Naive thymus-derived CD8-positive, alpha-beta T cell (primary cell): ENCODE measurements at regions of chr1 and their contacts with region 1.

Region 1: DNA sequence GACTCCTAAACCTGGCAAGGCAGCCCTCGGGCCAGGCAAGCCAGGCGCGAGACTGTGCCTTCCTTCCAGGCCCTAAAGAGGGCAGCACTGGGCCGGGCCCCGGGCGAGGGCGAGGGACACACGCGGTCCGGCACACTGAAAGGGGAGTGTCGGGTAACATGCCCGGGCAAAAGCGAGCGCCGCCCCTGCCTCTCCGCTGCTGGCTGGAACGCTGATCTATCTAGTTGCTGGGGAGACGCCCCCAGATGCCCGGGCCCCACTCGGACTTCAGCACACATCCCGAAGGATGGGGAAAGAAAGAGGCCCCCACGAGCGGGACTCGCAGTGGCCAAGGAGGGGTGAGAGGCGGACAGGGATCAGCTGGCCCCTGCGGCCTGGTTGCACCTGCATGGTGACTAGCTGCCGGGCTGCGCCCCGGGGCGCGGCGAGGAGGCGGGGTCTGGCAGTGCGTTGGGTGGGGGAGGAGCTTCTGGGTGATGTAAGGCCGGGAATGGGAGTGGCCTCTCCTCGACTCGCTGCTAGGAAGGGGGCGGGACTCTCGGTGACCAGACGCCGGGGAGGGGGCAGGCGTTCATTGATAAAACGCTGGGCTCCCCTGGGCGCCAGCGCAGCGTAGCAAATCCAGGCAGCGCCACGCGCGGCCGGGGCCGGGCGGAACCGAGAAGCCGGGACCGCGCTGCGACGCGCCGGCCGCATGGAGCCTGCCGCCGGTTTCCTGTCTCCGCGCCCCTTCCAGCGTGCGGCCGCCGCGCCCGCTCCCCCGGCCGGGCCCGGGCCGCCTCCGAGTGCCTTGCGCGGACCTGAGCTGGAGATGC is at the start of gene PLK3:
- DNase-seq: peak; percentile 97 to 99 (median 98)
- ATAC-seq: peak; percentile 78 to 81
- H3K4me3 Mint-ChIP-seq: peak within 1 kb of the TSS; percentile 72 to 99 (median 97)
- H3K27ac Mint-ChIP-seq: peak within 1 kb of the TSS; percentile 89 to 99 (median 99)
- H3K4me1 Mint-ChIP-seq: peaks cover 17 to 48% (median 45%) of the 10 kb centered on the region in 4 donors
- H3K27me3 Mint-ChIP-seq: no peaks in the 10 kb centered on the region
- polyA plus RNA-seq, gene PLK3: 14.3 to 36.0 (median 25.5) TPM

Region 2: DNA sequence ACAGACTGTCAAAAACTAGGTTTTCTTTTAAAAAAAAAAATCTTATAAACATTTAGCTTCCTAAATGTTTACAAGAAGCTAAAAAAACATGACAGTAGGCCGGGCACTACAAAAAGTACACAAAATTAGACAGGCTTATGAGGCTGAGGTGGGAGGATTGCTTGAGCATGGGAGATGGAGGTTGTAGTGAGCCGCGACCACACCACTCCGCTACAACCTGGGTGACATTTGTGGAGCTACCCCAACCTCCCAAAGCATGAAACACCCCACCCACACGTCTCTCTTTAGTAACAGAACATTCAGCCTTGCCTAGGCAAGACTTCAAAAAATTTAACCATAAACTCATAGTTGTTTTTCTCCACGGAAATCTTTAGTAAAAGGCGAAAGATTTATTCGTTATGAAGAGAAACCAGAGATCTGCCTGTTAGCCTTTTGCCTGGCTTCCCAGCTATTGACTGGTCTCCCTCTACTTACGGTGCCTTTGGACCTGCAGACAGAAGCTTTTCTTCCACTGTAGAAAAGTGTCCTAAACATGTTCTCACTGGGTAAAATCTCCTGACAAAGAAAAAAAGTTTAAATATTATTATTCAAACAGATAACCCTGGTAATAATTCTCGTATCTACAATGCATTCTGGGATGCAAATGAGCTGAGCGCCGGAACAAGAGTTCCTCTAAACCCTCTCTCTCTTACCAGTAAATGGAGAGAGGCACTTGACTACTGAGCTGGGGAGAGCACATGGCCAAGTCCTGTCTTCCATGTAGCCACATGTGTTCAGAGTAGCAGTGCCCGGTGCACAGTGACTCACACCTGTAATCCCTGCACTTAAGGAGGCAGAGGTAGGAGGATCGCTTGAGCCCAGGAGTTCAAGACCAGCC is 78.3 kb before region 1 on chr1:
- POLR2A ChIA-PET with region 1: interaction called, 32 read pairs
- DNase-seq: peak; percentile 17 to 85 (median 74)
- ATAC-seq: peak; percentile 84 to 90
- H3K4me3 Mint-ChIP-seq: peak overlapping the region; percentile 42 to 85 (median 79)
- H3K27ac Mint-ChIP-seq: peak overlapping the region; percentile 93 to 99 (median 96)
- H3K4me1 Mint-ChIP-seq: peaks cover 50 to 80% (median 78%) of the 10 kb centered on the region in 4 donors
- H3K27me3 Mint-ChIP-seq: no peaks in the 10 kb centered on the region

Region 3: DNA sequence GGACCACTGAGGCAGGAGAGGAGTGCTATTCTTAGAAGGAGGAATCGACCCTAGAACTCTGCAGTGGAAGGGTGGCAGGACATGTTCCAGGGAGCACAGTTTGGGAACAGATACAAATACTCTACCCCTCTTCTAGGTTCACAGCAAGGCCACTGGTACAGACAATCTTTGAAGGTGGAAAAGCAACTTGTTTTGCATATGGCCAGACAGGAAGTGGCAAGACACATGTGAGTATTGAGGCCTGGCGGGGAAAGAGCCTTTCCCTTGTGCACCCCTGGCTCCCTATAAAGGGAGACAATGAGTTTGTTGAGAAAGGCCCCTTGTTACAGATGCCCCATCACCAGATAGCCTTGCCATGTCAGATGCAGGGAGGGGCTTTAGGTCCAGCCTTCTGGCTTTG is 42.6 kb before region 1 on chr1:
- POLR2A ChIA-PET with region 1: no interaction called
- DNase-seq: no peak
- ATAC-seq: no peak
- H3K4me3 Mint-ChIP-seq: no peak overlapping the region
- H3K27ac Mint-ChIP-seq: peak overlapping the region in 2 of 10 donors; percentile 53 to 79
- H3K4me1 Mint-ChIP-seq: peaks cover 5 to 20% (median 14%) of the 10 kb centered on the region in 4 donors
- H3K27me3 Mint-ChIP-seq: no peaks in the 10 kb centered on the region

Region 4: DNA sequence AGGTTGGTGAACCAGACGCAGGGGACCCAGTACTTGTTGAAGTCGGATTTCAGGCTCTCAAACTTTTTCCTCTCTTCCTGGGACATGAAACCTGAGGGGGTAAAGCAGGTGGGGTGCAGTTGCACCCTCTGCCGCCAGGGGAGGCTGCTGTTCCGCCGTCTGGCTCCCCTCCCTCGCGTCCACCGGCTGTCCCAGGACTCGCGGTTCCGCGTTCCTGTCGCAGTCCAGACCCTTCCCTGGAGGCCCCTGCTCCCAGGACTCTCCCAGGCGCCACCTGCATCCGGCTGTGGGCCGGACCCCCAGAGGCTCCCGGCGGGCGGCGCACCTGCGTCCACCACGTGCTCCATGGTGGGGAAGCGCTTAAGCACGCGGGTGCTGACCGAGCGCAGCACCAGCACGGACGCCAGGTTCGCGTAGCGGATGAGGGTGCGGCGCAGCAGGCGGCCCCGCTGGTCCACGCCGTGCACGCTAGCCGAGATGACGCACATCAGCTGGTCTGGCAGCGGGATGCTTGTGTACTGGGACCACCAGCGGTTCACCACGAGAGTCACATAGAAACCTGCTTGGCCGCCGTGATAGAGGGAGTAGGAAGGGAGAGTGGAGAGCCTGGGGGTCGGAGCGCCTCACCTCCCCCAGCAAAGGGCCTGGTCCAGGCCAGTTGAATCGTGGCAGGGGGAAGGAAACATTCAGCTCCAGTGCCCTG is 13.7 kb before region 1 on chr1:
- POLR2A ChIA-PET with region 1: interaction called, 52 read pairs
- DNase-seq: peak; percentile 64 to 91 (median 79)
- ATAC-seq: peak; percentile 75 to 77
- H3K4me3 Mint-ChIP-seq: peak overlapping the region; percentile 69 to 84 (median 80)
- H3K27ac Mint-ChIP-seq: peak overlapping the region; percentile 35 to 95 (median 88)
- H3K4me1 Mint-ChIP-seq: peaks cover 16 to 34% (median 30%) of the 10 kb centered on the region in 4 donors
- H3K27me3 Mint-ChIP-seq: no peaks in the 10 kb centered on the region

Region 5: GRCh38 chr1:44826375-44827196 is 26.6 kb after region 1 on chr1:
- POLR2A ChIA-PET with region 1: interaction called, 590 read pairs
- DNase-seq: peak in 1 of 10 donors; percentile 50
- ATAC-seq: no peak
- H3K4me3 Mint-ChIP-seq: no peak overlapping the region
- H3K27ac Mint-ChIP-seq: no peak overlapping the region
- H3K4me1 Mint-ChIP-seq: peaks cover 0 to 2% (median 1%) of the 10 kb centered on the region in 4 donors
- H3K27me3 Mint-ChIP-seq: no peaks in the 10 kb centered on the region

Region 6: DNA sequence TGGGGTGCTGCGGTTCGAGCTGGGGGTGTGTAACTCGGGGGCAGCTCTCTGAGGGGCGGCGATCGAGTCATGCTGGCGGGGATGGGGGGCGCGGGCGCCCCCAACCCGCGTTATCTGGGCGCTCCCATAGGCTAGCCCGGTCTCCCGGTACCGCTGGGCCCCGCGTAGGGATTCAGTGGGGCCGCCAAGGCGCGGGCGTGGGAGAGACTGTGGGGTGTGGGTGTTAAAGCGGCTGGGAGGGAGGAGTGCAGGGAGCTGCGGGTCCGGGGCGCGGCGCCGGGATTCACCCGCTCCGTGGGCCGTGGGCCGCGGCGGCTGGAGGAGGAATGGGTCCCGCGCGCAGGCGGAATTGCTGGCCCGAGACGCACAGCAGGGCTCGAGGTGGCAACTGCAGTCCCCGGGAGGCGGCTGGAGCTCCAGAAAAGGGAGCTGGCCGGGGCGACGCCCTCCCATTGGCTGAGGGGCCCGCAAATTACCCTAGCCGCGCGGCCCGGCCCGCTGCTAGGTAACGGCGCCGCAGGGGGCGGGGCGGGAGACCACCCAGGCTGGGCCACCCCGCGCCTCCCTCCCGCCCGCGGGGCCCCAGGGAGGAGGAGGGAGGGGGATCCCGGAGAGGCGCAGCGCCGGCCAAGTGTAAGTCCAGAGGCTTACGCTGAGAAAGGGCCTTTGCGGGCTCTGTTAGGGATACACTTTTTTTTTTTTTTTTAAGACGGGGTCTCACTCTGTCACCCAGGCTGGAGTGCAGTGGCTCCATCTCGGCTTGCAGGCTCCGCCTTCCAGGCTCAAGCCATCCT is 43.1 kb after region 1 on chr1 and contains the start of gene PTCH2:
- POLR2A ChIA-PET with region 1: interaction called, 12 read pairs
- DNase-seq: peak; percentile 20 to 67 (median 36)
- ATAC-seq: peak; percentile 83 to 91
- H3K4me3 Mint-ChIP-seq: peak within 1 kb of the TSS; percentile 68 to 81 (median 76)
- H3K27ac Mint-ChIP-seq: peak within 1 kb of the TSS in 5 of 10 donors; percentile 57 to 76 (median 70)
- H3K4me1 Mint-ChIP-seq: peaks cover 3 to 8% (median 7%) of the 10 kb centered on the region in 4 donors
- H3K27me3 Mint-ChIP-seq: peaks cover 0 to 7% (median 3%) of the 10 kb centered on the region in 5 donors
- polyA plus RNA-seq, gene PTCH2: not detected

Region 7: DNA sequence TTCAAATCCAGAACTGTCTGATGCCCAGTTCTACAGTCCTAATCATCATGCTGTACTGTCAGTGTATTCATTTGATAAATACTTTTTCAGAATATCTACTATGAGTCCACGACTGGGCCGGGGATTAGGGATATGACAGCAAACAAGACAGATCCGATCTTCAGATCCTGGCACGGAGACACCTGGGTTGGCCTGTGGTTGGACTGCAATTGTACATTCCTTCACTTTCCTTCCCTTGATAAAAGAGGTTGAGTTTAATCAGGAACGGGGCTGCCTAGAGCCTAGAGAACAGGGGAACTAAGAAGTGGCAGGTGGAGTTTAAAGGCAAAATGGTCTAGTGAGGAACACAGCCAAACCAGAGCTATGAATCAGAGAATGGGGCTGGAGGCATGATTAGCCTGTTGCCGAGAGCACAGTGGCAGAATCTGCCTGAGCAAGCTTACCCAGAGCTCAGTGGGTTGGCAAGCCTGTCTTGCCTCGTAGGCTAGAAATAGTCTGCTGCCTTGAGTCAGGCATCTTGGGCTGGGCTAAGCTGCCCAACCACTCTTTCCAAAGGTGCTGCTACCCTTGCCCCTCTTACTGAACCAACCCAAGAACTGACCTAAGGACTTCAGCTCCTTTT is 81.1 kb after region 1 on chr1:
- POLR2A ChIA-PET with region 1: no interaction called
- DNase-seq: no peak
- ATAC-seq: no peak
- H3K4me3 Mint-ChIP-seq: no peak overlapping the region
- H3K27ac Mint-ChIP-seq: no peak overlapping the region
- H3K4me1 Mint-ChIP-seq: peaks cover 0 to 1% (median 0%) of the 10 kb centered on the region in 4 donors
- H3K27me3 Mint-ChIP-seq: no peaks in the 10 kb centered on the region

Region 8: DNA sequence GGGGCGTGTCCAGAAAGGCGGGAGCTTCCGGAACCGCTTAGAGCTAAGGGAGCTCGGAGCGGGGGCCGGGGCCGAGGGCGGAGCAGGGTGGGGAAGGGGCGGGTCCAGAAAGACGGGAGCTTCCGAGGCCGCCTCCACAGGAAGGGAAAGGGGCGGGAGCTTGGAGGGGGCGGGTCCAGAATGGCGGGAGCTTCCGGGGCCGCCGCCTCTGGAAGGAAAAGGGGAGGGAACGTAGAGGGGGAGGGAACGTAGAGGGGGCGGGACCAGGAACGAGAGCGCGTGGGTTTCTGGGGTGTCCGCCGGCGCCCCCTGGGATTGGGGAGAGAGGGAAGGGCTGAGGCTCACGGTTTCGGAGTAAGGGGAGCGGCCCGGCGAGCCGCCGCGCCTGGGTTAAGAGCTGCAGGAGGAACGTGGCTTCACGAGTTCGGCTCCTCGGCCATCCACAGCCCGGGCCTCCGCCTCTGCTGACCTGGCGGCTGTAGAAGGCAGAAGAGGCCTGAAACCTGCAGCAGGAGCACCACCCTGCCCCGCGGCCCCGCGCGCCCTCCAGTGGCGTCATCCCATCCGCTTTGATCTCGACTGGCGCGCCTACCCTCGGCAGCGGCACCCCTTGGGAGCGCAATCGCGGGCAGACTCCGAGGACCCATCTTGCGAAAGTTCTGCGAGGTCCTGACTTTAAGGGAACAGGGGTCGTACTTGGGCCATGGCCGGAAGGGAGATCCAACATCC is 503.8 kb after region 1 on chr1:
- POLR2A ChIA-PET with region 1: interaction called, 19 read pairs
- DNase-seq: peak; percentile 86 to 98 (median 96)
- ATAC-seq: peak; percentile 83 to 86
- H3K4me3 Mint-ChIP-seq: peak overlapping the region; percentile 88 to 96 (median 92)
- H3K27ac Mint-ChIP-seq: peak overlapping the region; percentile 91 to 98 (median 96)
- H3K4me1 Mint-ChIP-seq: peaks cover 5 to 37% (median 20%) of the 10 kb centered on the region in 4 donors
- H3K27me3 Mint-ChIP-seq: no peaks in the 10 kb centered on the region